Activated naive CD4-positive, alpha-beta T cell treated with anti-CD3 and anti-CD28 coated beads for 36 hours (primary cell): ENCODE measurements at regions of chr12 and their contacts with region 1.

Region 1: DNA sequence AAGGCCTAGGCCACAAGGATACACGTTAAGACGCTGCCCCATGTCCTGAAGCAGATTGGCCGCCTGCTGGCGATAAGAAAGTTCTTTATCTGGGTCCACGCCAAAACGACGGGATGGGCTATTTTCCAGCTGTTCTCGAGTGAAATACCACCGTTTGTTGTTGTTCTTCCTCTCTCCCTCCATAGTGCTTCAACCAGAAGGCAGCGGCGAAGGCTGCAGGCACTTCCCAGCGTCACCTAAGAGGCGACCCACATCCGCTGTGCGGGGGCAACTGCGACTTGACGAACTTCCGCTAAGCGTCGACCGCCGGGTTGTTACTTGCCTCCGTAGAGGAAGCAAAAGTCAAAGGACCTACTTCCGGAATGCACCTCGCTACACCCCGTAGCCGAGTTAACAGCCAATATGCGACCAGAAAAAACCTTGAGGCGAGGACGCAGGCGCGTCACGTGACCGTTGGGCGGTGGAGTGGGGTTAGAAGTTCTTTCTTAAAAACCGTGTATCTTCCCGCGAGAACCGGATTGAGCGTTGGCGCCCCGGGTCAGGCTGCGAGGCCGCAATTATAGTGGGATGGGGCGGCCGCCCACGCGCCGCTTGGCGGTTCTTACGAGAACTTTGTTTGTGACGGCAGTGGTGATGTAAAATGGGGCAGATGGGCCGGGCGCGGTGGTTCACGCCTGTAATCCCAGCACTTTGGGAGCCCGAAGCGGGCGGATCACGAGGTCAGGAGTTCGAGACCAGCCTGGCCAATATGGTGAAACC is at the start of gene CCNT1:
- DNase-seq: peak; percentile 100
- H3K4me3 Mint-ChIP-seq: peak within 1 kb of the TSS; percentile 90
- H3K27ac Mint-ChIP-seq: peak within 1 kb of the TSS; percentile 99
- H3K4me1 Mint-ChIP-seq: peaks cover 39% of the 10 kb centered on the region
- H3K27me3 Mint-ChIP-seq: no peaks in the 10 kb centered on the region
- total RNA-seq, gene CCNT1: 73.8 to 77.0 TPM

Region 2: DNA sequence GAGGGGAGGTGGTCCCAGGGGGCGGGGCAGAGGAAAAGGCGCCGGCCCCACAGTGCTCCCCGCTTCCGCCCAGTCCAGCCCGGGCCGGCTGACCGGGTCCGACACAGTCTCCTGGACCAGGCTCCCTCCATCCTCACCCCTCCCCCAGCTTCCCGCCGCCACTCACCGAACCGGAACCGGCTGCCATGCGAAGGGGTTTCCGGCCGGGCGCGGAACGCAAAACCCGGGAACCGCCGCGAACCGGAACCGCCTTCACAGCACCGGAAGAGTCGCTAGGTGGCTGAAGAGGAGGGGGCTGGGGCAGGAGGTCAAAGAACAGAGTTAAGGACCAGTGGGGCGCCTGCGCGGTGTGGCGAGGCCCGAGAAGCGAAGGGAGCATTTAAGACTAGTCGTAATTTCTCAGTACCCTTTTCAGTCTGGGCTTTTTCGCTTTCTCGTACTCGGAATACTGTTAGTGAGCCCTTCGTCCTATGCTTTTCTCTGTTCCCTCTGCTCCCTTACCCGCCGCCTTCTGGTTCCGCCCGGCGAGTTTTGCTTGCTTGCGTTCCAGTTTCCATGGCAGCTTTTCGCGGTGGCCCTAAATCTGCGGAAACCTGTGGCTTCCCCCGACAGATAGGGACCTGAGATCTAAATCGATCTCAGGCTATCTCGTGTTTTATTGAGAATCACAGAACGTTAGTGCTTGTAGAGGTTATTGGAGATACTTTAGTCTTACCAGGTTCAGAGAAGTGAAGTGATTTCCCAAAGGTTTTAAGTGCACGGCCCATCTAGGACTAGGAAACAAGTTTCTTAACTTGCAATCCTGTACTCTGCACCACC is 610.6 kb before region 1 on chr12 and contains the start of gene SENP1:
- CTCF ChIA-PET with region 1: no interaction called
- intact Hi-C with region 1: loop called (anchors 1 kb)
- DNase-seq: peak; percentile 94
- H3K4me3 Mint-ChIP-seq: peak within 1 kb of the TSS; percentile 87
- H3K27ac Mint-ChIP-seq: peak within 1 kb of the TSS; percentile 96
- H3K4me1 Mint-ChIP-seq: peaks cover 47% of the 10 kb centered on the region
- H3K27me3 Mint-ChIP-seq: no peaks in the 10 kb centered on the region
- total RNA-seq, gene SENP1: 41.4 to 47.8 TPM

Region 3: DNA sequence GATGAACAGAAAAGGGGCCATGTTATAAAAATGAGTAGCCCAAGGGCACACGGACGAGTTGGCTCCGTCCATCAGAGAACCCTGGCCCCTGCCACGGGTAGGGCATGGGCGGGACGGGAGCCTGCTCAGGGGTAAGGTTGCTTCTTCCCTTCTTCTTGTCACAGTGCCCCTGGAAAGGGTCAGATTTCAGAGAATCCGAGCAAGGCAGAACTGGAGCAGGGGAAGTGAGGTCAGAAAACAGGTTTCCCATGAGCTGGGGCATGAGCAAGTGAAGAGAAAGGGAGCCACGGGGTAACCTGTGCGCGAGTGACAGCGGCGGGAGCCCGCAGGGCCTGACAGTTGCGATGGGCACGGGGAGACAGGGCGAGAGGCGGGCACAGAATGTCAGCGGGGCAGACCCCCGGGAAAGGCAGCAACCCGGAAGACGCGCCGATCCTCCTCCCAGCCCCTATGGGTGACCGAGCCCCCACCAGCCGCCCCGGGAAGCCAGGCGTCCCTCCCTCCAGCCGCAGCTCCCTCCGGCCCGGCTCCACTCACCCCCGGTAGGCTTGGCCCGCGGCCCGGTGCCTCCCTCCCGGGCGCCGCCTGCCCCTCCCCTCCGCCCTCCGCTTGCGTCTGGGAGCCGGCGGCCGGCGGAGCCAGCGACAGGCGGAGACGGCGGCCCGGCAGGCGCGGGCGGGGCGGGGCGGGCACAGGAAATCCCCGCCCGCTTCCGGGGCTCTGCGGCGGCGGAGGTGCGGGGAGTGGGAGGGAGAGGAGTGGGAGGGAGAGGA is 366.2 kb before region 1 on chr12 and contains the start of gene ZNF641:
- CTCF ChIA-PET with region 1: no interaction called
- intact Hi-C with region 1: loop called (anchors 1 kb)
- DNase-seq: peak; percentile 79
- H3K4me3 Mint-ChIP-seq: peak within 1 kb of the TSS; percentile 91
- H3K27ac Mint-ChIP-seq: peak within 1 kb of the TSS; percentile 81
- H3K4me1 Mint-ChIP-seq: peaks cover 24% of the 10 kb centered on the region
- H3K27me3 Mint-ChIP-seq: no peaks in the 10 kb centered on the region
- total RNA-seq, gene ZNF641: 3.5 to 6.0 TPM

Region 4: DNA sequence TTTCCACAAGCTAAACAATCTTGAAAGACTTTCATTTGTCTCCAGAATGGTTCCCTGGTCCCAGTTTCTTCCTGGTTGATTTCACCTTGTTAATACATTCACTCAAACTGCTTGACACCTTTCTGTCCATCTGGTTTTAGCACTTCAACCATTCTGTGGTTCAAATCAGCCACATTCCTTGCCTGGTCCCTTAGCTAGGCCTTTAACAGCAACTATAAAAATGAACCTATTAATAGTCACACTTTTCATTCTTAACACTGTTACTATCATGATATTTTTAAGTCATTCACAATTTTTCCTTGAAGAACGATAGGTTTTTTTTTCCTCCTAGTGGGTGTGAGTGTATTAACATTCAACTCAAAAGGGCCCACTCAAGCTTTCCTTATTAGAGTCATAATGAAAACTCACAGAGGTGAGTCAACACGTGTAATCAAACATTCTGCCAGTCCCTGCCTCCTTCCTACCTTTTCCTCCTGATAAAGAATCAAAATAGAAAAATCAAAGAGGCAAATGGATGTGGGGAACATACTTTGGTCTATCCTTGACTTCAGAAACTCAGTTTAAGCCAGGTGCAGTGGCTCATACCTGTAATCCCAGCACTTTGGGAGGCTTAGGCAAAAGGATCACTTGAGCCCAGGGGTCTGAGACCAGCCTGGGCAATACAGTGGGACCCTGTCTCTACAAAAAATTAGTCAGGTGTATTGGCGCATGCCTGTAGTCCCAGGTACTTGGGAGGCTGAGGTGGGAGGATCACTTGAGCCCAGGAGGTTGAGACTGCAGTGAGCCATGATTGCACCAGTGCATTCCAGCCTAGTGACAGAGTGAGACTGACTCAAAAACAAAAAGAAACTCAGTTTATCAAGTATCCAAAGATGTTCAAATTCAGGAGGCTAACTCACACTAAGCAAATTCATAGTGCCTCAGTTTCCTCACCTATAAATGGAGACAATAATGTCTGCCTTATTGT is 34.4 kb after region 1 on chr12:
- CTCF ChIA-PET with region 1: interaction called, 3 read pairs
- intact Hi-C with region 1: loop called (anchors 1 kb)
- DNase-seq: peak; percentile 28
- H3K4me3 Mint-ChIP-seq: no peak overlapping the region
- H3K27ac Mint-ChIP-seq: peak overlapping the region; percentile 82
- H3K4me1 Mint-ChIP-seq: peaks cover 19% of the 10 kb centered on the region
- H3K27me3 Mint-ChIP-seq: no peaks in the 10 kb centered on the region

Region 5: GRCh38 chr12:48865434-48866290 is 149.0 kb after region 1 on chr12 and contains the start of gene RND1:
- CTCF ChIA-PET with region 1: no interaction called
- intact Hi-C with region 1: loop called (anchors 1 kb)
- DNase-seq: peak; percentile 93
- H3K4me3 Mint-ChIP-seq: peak within 1 kb of the TSS; percentile 87
- H3K27ac Mint-ChIP-seq: peak within 1 kb of the TSS; percentile 62
- H3K4me1 Mint-ChIP-seq: peaks cover 22% of the 10 kb centered on the region
- H3K27me3 Mint-ChIP-seq: peaks cover 22% of the 10 kb centered on the region
- total RNA-seq, gene RND1: 6.8 to 7.4 TPM

Region 6: GRCh38 chr12:48924617-48925303 is 208.1 kb after region 1 on chr12:
- CTCF ChIA-PET with region 1: no interaction called
- intact Hi-C with region 1: no loop called
- DNase-seq: peak; percentile 81
- H3K4me3 Mint-ChIP-seq: peak overlapping the region; percentile 91
- H3K27ac Mint-ChIP-seq: peak overlapping the region; percentile 96
- H3K4me1 Mint-ChIP-seq: peaks cover 49% of the 10 kb centered on the region
- H3K27me3 Mint-ChIP-seq: no peaks in the 10 kb centered on the region

Region 7: DNA sequence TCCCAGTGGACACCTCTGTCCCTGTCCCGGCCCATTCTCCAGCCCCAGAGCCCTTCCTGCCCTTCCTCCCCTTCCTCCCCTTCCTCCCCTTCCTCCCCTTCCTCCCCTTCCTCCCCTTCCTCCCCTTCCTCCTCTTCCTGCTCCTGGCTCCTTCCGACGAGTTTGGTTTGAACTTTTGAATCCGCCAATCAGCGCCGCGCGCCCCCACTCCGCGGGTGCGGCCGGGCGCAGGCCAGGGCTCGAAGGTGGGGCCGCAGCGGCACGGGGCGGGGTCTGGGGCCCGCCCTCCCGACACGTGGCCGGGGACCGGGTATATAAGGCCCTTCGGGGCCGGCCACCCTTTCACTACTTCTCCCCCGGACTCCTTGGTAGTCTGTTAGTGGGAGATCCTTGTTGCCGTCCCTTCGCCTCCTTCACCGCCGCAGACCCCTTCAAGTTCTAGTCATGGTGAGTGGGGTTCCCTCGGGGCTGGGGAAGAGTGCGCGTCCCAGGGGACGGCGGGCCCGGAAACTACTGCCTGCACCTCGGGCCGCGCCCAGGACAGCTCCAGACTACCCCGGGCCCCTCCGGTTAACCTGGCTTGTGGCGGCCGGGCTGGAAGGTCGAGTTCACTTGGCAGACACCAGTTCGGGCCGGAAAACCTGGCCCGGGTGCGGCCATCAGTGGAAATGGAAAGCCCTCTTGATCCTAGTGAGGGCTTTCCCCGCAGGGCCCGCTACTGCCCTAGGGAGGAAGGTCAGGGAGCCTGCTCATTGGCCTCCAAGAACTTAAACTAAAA is 548.3 kb after region 1 on chr12 and contains the start of gene TUBA1C:
- CTCF ChIA-PET with region 1: no interaction called
- intact Hi-C with region 1: loop called (anchors 10 kb)
- DNase-seq: peak; percentile 91
- H3K4me3 Mint-ChIP-seq: peak within 1 kb of the TSS; percentile 97
- H3K27ac Mint-ChIP-seq: peak within 1 kb of the TSS; percentile 96
- H3K4me1 Mint-ChIP-seq: peaks cover 50% of the 10 kb centered on the region
- H3K27me3 Mint-ChIP-seq: peaks cover 2% of the 10 kb centered on the region
- total RNA-seq, gene TUBA1C: 214 to 227 TPM